Left colon (tissue), 2 donors: ENCODE measurements at regions of chr18 and their contacts with region 1.

Region 1: DNA sequence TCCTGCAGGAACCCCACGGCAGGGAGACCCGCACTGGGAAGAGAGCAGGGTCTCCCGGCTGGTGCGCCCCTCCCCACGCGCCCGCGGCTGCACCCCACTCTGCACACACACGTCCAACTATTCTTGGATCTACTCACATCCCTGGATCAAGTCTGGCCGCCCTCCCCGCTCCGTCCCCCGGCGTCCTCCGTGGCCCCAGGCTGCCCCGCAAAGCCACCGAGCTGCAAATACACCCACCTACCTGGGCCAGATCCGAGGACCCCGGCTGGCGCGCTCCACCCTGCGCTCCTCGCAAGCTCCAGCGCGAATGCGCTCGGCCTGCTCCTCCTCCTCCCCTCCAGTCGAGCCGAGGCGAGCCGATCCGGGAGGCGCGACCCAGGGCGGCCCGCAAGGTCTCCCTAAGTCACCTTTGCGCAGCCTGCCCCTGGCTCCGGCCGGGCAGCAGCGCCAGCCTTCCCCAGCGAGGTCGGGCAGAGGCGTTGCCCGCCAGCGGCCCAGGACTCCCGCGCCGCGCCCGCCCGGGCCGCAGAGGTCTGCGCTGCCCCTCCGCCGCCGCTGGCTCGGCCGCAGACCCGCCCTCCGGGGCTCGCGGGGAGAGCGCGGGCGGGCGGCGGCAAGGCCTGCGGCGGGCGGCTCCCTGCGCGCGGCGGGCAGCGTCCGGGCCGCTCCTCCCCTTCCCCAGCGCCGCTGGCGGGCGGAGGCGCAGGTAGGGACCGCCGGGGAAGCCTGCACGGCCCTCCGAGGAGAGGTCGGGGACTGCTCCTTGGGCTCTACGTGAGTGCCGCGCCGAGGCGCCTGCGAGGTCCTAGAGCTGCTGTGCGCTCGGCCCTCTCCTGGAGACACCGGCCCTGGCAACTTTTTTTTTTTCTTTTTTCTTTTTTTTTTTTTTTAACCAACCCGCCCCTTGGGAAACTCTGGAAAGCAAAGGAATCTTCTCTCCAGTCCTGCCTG is 126.0 kb downstream of the OSBPL1A start:
- DNase-seq: peak; percentile 71 to 79
- ATAC-seq: peak; percentile 75

Region 2: GRCh38 chr18:24176727-24177416 is 94.8 kb before region 1 on chr18:
- intact Hi-C with region 1: loop called in 1 of 2 experiments (anchors 2 kb)
- DNase-seq: peak; percentile 39 to 81
- ATAC-seq: peak; percentile 69

Region 3: DNA sequence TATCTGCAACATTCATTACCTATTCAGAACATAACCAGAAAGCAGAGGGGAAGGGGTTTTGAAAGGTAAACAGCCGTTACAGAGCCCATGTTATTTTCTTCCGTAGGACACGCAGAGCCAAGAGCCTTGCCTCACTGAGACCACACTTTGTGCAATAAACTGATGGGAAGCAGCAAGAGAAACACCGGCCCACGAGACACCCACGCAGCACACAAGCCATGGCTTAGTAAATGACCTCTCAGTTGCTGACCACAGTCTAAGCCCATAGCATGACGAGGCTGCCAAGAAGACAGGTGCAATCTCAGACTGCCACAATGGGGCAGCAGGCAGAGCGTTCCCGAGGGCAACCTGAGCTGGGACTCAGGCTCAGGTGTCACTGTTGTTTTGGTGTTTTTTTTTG is 73.2 kb before region 1 on chr18:
- intact Hi-C with region 1: no loop called
- DNase-seq: no peak
- ATAC-seq: no peak